Activated CD4-positive, alpha-beta T cell treated with anti-CD3 and anti-CD28 coated beads for 36 hours (primary cell): ENCODE measurements at regions of chr12 and their contacts with region 1.

Region 1: DNA sequence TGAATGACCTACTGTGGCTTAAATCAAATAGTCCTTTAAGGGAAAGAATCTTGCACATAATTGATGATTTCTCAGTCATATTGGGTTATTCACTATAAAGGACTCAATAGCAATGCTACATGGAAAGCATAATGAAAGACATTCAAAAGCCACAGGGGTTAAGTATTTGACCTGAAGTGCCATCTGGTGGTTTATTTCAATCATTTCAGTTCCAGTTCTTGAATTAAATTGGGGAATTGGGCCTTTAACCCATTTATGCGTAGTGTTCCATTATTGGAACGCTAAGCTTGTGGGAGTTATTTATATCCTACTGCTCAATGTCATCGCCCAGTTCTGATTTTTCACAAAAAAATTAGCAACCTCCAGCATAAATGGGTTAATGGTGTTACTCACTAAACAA is 41.3 kb upstream of the C12orf71 start:
- DNase-seq: no peak
- ATAC-seq: no peak
- H3K4me3 Mint-ChIP-seq: no peak overlapping the region
- H3K27ac Mint-ChIP-seq: no peak overlapping the region
- H3K4me1 Mint-ChIP-seq: no peaks in the 10 kb centered on the region
- H3K27me3 Mint-ChIP-seq: no peaks in the 10 kb centered on the region

Region 2: DNA sequence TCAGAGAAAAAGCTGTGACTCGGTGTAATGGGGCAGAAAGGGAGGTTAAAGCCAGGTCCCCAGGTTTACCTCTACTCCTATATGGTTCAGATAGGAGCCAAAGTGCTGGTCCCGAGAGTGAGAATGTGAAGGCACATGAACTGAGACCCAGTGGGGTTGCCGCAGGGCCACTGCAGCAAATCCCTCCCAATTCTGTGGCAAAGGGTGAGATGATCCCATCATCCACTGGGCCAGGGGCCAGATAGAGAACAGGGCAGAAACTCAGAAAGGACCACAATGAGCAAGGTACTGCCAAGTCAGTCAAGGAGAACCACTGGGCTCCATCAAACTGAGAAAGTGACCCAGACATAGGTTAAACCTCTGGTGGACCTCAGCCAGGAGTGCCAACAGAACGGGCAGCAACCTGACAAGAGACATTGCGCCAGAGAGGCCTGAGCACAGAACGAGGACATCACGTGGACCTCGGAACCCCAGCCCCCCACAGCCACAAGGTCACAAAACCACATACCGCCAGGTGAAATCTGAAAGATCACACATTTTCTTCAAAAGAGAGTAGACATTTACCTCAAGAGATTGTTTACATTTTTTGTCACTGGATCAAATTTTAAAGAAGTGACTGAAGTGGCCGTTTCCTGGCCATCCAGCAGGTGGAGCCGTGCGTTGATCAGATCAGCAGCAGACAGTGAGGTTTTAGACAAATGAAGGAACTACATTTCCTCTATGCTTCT is 270.2 kb before region 1 on chr12:
- CTCF ChIA-PET with region 1: no interaction called
- POLR2A ChIA-PET with region 1: no interaction called
- intact Hi-C with region 1: loop called in 1 of 2 experiments (anchors 5 kb)
- DNase-seq: peak; percentile 84
- ATAC-seq: peak; percentile 93
- H3K4me3 Mint-ChIP-seq: no peak overlapping the region
- H3K27ac Mint-ChIP-seq: no peak overlapping the region
- H3K4me1 Mint-ChIP-seq: no peaks in the 10 kb centered on the region
- H3K27me3 Mint-ChIP-seq: peaks cover 1% of the 10 kb centered on the region

Region 3: GRCh38 chr12:27024291-27024690 is 99.4 kb before region 1 on chr12:
- CTCF ChIA-PET with region 1: no interaction called
- POLR2A ChIA-PET with region 1: no interaction called
- intact Hi-C with region 1: loop called in 1 of 2 experiments (anchors 5 kb)
- DNase-seq: no peak
- ATAC-seq: no peak
- H3K4me3 Mint-ChIP-seq: peak overlapping the region; percentile 96
- H3K27ac Mint-ChIP-seq: no peak overlapping the region
- H3K4me1 Mint-ChIP-seq: peaks cover 30% of the 10 kb centered on the region
- H3K27me3 Mint-ChIP-seq: peaks cover 4% of the 10 kb centered on the region

Region 4: GRCh38 chr12:27635349-27635972 is 511.8 kb after region 1 on chr12:
- CTCF ChIA-PET with region 1: no interaction called
- POLR2A ChIA-PET with region 1: no interaction called
- intact Hi-C with region 1: loop called (anchors 5 kb)
- DNase-seq: no peak
- ATAC-seq: peak; percentile 26
- H3K4me3 Mint-ChIP-seq: no peak overlapping the region
- H3K27ac Mint-ChIP-seq: no peak overlapping the region
- H3K4me1 Mint-ChIP-seq: peaks cover 2% of the 10 kb centered on the region
- H3K27me3 Mint-ChIP-seq: no peaks in the 10 kb centered on the region